CD8-positive, alpha-beta memory T cell (primary cell): ENCODE measurements at regions of chr19 and their contacts with region 1.

Region 1: DNA sequence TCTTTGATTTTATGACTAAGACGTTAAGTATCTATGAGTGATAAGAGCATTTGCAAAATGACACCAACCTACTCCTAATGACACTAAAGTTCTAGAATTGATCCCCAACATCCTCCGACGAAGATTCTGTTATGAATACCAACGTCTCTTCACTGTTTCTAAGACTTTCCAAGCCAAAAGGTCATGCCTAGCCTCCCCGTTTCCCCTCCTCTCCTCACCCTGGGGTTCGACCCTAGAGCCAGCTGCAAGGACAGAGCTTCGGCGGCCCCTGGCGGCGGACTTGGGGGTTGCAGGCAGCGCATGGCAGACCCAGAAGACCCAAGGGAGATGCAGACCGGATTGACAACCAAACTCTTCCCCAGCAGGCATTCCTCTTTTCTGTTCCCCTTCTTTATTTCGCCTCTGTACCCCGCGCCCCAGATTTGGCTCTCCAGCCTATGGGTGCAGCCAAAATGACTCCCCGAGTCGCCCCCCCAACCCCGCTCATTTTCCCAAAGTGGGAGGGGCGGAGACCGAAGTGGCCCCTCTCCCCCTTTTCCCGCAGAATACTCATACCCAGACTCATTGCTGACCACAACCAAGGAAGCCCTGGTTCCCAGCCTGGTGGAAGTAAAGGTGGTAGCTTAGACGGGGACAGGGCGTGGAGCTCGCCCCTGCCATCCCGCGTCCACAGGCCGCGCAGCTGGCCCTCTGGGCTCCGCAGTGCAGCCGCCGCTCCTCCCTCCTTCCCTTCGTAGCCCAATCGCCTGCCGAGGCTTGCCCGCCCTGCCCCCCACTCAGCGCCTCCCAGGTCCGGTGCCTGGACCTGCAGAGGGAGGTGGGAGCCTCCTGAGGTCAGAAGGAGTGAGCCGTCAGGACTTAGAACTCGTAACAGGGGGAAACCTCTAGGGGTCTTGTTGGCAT is 4.1 kb upstream of the EML2 start:
- DNase-seq: peak; percentile 77 to 90 (median 82)
- H3K4me3 ChIP-seq: no peak overlapping the region
- H3K4me3 Mint-ChIP-seq: peak overlapping the region; percentile 67 to 89 (median 80)
- H3K27ac ChIP-seq: peak overlapping the region; percentile 84
- H3K27ac Mint-ChIP-seq: peak overlapping the region; percentile 83 to 98 (median 93)
- H3K4me1 ChIP-seq: peaks cover 47% of the 10 kb centered on the region
- H3K4me1 Mint-ChIP-seq: peaks cover 39 to 59% (median 41%) of the 10 kb centered on the region in 3 donors
- H3K27me3 ChIP-seq: no peaks in the 10 kb centered on the region
- H3K27me3 Mint-ChIP-seq: peaks cover 0 to 2% of the 10 kb centered on the region in 2 donors

Region 2: DNA sequence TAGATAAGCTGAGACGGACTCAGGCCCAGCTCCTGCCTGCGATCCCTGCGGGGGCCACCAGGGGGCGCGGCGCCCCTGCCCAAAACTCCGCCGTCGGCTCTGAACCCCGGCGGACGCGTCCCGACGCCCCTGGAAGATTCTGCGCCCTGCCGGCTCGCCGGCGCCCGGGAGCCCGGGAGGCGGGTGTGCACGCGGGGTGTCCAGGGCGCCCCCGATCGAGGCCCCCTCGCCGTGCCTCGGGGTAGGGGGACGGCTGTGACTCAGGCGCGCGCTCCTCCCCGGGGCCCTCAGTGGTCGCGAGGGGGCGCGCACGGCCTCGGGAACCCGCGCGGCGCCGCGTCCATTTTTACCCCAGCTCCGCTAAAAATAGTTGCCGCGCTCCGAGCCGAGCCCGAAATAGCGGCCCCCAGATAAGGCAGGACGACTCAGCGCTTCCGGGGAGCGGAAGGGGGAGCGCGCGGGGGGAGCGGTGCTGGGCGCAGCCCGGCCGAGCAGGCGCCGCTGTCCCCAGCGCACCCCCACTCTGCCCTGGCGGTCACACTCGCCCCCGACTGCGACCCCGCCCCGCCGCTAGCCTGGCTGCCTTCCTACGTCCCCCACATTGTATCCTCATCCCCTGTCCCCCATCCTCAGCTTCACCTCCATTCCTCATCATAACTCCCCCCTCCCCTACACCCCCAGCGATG is 203.6 kb before region 1 on chr19:
- CTCF ChIA-PET with region 1: interaction called, 23 read pairs
- POLR2A ChIA-PET with region 1: interaction called, 4 read pairs
- DNase-seq: peak; percentile 80 to 92 (median 88)
- H3K4me3 ChIP-seq: peak overlapping the region; percentile 47
- H3K4me3 Mint-ChIP-seq: peak overlapping the region; percentile 63 to 84 (median 75)
- H3K27ac ChIP-seq: peak overlapping the region; percentile 76
- H3K27ac Mint-ChIP-seq: peak overlapping the region; percentile 74 to 94 (median 90)
- H3K4me1 ChIP-seq: peaks cover 35% of the 10 kb centered on the region
- H3K4me1 Mint-ChIP-seq: peaks cover 33 to 36% (median 35%) of the 10 kb centered on the region in 3 donors
- H3K27me3 ChIP-seq: no peaks in the 10 kb centered on the region
- H3K27me3 Mint-ChIP-seq: no peaks in the 10 kb centered on the region

Region 3: DNA sequence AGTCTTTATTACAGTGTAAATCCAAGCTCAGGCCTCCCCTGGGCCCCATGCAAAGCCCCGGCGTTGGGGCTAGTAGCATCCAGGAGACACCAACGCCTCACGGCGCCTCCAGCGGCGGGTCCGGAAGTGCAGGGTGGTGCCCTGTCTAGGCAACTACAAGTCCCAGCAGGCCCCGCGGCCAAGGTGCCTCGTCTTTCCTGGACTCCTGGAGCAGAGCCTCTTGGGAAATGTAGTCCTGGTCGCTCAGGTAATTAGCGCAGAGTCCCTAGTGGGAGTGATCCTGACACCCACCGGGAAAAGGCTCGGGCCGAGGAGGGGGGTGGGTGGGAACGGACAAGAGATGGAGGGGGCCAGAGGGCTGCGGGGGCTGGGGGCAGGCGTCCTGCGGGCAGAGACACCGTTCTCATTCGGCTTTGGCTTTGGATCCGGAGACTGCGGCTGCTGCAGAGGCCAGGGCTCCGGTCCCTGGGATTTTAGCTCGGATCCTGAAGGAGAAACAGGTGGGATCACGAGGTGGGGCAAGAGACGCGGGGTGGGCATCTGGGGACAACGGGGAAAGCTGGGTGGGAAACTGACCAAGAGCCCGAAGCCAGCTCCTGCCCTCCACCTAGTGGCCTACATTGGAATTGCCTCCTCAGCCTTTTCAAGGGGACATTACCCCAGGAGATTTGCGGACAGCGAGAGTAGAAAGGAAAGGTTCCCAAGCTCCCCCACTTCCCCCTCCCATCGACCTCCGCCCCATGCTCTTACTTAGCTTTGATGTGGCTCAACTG is 157.8 kb before region 1 on chr19:
- CTCF ChIA-PET with region 1: interaction called, 13 read pairs
- POLR2A ChIA-PET with region 1: no interaction called
- DNase-seq: peak; percentile 92 to 98 (median 95)
- H3K4me3 ChIP-seq: peak overlapping the region; percentile 94
- H3K4me3 Mint-ChIP-seq: peak overlapping the region; percentile 90 to 98 (median 94)
- H3K27ac ChIP-seq: peak overlapping the region; percentile 44
- H3K27ac Mint-ChIP-seq: peak overlapping the region in 7 of 8 donors; percentile 23 to 91 (median 78)
- H3K4me1 ChIP-seq: no peaks in the 10 kb centered on the region
- H3K4me1 Mint-ChIP-seq: peaks cover 8 to 10% (median 10%) of the 10 kb centered on the region in 3 donors
- H3K27me3 ChIP-seq: no peaks in the 10 kb centered on the region
- H3K27me3 Mint-ChIP-seq: peaks cover 0 to 10% of the 10 kb centered on the region in 2 donors

Region 4: DNA sequence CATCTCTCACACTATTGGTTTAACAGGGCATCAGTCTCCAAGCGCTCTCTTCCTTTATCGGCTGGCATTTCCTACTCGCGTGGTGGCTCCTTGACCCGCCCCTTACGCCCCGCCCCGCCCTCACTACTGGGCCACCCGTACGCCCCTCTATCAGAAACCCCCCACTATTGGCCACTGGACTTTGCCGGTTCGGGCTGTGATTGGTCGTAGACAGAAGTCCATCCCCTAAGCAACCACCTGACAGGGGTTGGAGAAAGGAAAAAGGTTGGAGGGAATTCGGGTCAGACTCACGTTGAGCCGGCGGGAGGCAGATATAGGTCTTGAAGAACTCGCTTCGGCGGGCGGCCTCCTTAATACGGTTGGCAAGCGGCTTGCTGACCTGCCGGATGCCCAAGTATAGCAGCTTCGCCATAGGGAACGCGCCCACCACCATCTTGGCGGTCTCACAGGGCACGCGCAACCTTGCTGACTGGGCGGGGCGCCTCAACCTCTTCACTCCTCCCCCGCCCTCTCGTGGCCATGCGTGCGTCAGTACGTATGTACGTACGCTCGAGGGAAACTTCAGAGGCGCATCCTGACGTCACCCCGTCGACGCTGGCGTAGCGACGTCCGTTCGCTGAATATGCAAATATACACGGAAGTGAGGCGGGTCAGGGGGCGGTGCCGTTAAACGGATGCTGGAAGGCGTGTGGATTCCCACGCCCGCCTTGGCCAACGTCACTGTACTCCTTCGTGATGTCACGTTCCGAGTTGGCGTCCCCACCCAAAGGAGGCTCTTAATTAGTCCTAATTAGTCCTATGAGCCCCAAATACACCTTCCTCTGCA is 58.7 kb before region 1 on chr19 and contains the start of gene OPA3:
- CTCF ChIA-PET with region 1: interaction called, 8 read pairs
- POLR2A ChIA-PET with region 1: interaction called, 10 read pairs
- DNase-seq: peak; percentile 99 to 100 (median 99)
- H3K4me3 ChIP-seq: peak within 1 kb of the TSS; percentile 100
- H3K4me3 Mint-ChIP-seq: peak within 1 kb of the TSS; percentile 86 to 98 (median 94)
- H3K27ac ChIP-seq: peak within 1 kb of the TSS; percentile 99
- H3K27ac Mint-ChIP-seq: peak within 1 kb of the TSS; percentile 91 to 100 (median 98)
- H3K4me1 ChIP-seq: peaks cover 12% of the 10 kb centered on the region
- H3K4me1 Mint-ChIP-seq: peaks cover 17 to 26% (median 19%) of the 10 kb centered on the region in 3 donors
- H3K27me3 ChIP-seq: no peaks in the 10 kb centered on the region
- H3K27me3 Mint-ChIP-seq: peaks cover 4 to 11% of the 10 kb centered on the region in 2 donors
- total RNA-seq, gene OPA3: 14.2 to 17.5 TPM

Region 5: DNA sequence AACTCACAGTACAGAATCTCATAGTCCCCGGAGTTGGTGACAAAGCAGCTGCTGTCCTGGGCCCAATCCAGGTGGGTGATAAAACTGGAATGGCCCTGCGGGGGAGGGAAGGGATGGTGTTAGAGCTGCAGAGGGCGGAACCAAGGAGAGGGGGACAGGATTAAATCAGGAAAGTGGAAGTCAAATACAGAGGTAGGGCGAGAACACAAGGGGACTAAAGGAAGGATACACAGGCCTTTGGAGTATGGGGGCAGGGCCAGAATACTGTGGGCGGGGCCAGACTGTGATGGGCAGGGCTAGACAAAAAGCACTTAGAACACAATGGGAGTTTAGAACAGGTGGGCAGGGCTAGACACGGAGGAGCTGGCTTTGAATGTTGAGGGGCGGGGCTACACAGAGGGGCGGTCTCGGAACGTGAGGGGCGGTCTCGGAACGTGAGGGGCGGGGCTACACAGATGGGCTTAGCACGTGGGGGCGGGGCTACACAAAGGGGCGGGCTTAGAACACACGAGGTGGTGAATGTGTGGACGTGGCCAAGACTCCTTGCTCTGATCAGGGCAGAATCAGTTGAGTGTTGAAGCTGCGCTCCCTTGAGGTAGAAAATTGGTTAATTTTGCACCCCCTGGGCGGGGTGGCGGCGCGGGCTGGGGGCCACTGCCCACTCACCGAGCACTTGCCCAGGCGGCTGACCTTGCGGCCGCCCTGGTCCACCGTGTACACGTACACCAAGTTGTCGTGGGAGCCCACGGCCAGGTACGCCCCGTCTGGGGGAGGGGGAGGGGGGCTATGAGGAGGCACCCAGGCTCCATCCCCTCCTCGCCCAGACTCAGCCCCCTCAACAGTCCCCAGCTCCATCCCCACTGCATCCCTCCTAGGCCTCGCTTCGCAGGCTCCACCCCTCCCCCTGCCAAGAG is 27.2 kb before region 1 on chr19:
- CTCF ChIA-PET with region 1: interaction called, 14 read pairs
- POLR2A ChIA-PET with region 1: interaction called, 3 read pairs
- DNase-seq: peak; percentile 65 to 76 (median 69)
- H3K4me3 ChIP-seq: no peak overlapping the region
- H3K4me3 Mint-ChIP-seq: no peak overlapping the region
- H3K27ac ChIP-seq: no peak overlapping the region
- H3K27ac Mint-ChIP-seq: peak overlapping the region in 6 of 8 donors; percentile 47 to 87 (median 70)
- H3K4me1 ChIP-seq: no peaks in the 10 kb centered on the region
- H3K4me1 Mint-ChIP-seq: peaks cover 7 to 17% (median 11%) of the 10 kb centered on the region in 3 donors
- H3K27me3 ChIP-seq: no peaks in the 10 kb centered on the region
- H3K27me3 Mint-ChIP-seq: no peaks in the 10 kb centered on the region

Region 6: GRCh38 chr19:45670670-45671453 is 27.6 kb after region 1 on chr19:
- CTCF ChIA-PET with region 1: interaction called, 12 read pairs
- POLR2A ChIA-PET with region 1: interaction called, 4 read pairs
- DNase-seq: peak; percentile 24 to 61 (median 41)
- H3K4me3 ChIP-seq: no peak overlapping the region
- H3K4me3 Mint-ChIP-seq: peak overlapping the region in 6 of 7 donors; percentile 19 to 65 (median 32)
- H3K27ac ChIP-seq: peak overlapping the region; percentile 24
- H3K27ac Mint-ChIP-seq: peak overlapping the region in 1 of 8 donors; percentile 17
- H3K4me1 ChIP-seq: peaks cover 20% of the 10 kb centered on the region
- H3K4me1 Mint-ChIP-seq: peaks cover 24 to 39% (median 27%) of the 10 kb centered on the region in 3 donors
- H3K27me3 ChIP-seq: no peaks in the 10 kb centered on the region
- H3K27me3 Mint-ChIP-seq: peaks cover 0 to 12% of the 10 kb centered on the region in 2 donors

Region 7: GRCh38 chr19:45692187-45693105 is 49.2 kb after region 1 on chr19 and contains the start of gene QPCTL:
- CTCF ChIA-PET with region 1: interaction called, 18 read pairs
- POLR2A ChIA-PET with region 1: interaction called, 7 read pairs
- DNase-seq: peak; percentile 94 to 98 (median 98)
- H3K4me3 ChIP-seq: peak within 1 kb of the TSS; percentile 72
- H3K4me3 Mint-ChIP-seq: peak within 1 kb of the TSS; percentile 91 to 98 (median 93)
- H3K27ac ChIP-seq: peak within 1 kb of the TSS; percentile 92
- H3K27ac Mint-ChIP-seq: peak within 1 kb of the TSS; percentile 92 to 100 (median 97)
- H3K4me1 ChIP-seq: peaks cover 7% of the 10 kb centered on the region
- H3K4me1 Mint-ChIP-seq: peaks cover 16 to 27% (median 19%) of the 10 kb centered on the region in 3 donors
- H3K27me3 ChIP-seq: no peaks in the 10 kb centered on the region
- H3K27me3 Mint-ChIP-seq: no peaks in the 10 kb centered on the region
- total RNA-seq, gene QPCTL: 11.3 to 11.5 TPM